IMR-90 (cell line): ENCODE measurements at regions of chr3 and their contacts with region 1.

Region 1: GRCh38 chr3:128584412-128585020 is 66.1 kb downstream of the RPN1 start:
- DNase-seq: peak; percentile 56
- ATAC-seq: peak; percentile 100
- H3K4me3 ChIP-seq: no peak overlapping the region
- H3K27ac ChIP-seq: no peak overlapping the region
- H3K4me1 ChIP-seq: no peaks in the 10 kb centered on the region
- H3K27me3 ChIP-seq: peaks cover 16% of the 10 kb centered on the region
- CTCF ChIP-seq: peak; percentile 80
- POLR2A ChIP-seq: no peak
- RAD21 ChIP-seq: peak; percentile 89

Region 2: GRCh38 chr3:128075516-128076482 is 508.7 kb before region 1 on chr3:
- CTCF ChIA-PET with region 1: no interaction called
- POLR2A ChIA-PET with region 1: no interaction called
- dilution Hi-C with region 1: no loop called
- in situ Hi-C with region 1: no loop called
- intact Hi-C with region 1: loop called (anchors 5 kb)
- DNase-seq: peak; percentile 79
- ATAC-seq: peak; percentile 88
- H3K4me3 ChIP-seq: peak overlapping the region; percentile 17; the same call in 1 of the 2 replicates
- H3K27ac ChIP-seq: peak overlapping the region; percentile 2; the same call in 1 of the 2 replicates
- H3K4me1 ChIP-seq: peaks cover 27% of the 10 kb centered on the region
- H3K27me3 ChIP-seq: no peaks in the 10 kb centered on the region
- CTCF ChIP-seq: peak; percentile 96
- POLR2A ChIP-seq: no peak
- RAD21 ChIP-seq: peak; percentile 85

Region 3: DNA sequence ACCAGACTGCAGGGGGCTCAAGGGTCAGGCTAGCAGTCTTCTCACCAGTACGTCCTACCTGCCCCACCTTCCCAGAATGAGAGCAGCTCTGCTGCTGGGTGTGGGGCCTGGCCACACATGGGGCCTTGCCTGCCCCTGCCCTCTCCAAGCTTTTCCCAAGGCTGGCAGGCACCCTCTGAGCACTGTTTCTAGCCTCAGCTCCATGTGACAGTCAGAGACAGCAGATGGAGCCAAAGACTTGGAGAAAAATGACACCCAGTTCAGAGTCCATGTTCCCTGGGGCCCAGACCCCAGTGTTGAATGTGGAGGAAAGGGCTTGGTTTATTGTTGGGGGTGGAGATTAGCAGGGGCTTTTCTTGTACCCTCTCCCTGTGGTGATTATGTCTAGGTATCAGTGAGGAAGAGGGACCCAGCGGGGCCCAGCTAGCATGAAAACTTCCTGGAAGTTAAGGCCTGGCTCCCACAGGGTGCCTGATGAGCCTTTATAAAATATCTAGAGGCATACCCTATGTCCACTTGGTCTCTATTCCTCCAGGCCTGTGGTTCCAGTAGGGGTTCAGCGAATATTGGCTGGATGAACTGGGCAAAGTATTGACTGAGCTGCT is 277.4 kb before region 1 on chr3:
- CTCF ChIA-PET with region 1: no interaction called
- POLR2A ChIA-PET with region 1: no interaction called
- dilution Hi-C with region 1: no loop called
- in situ Hi-C with region 1: no loop called
- intact Hi-C with region 1: loop called (anchors 10 kb)
- DNase-seq: no peak
- ATAC-seq: 0 out of 2 replicates have a peak, but pooled peaks have one; percentile 40
- H3K4me3 ChIP-seq: no peak overlapping the region
- H3K27ac ChIP-seq: no peak overlapping the region
- H3K4me1 ChIP-seq: no peaks in the 10 kb centered on the region
- H3K27me3 ChIP-seq: no peaks in the 10 kb centered on the region
- CTCF ChIP-seq: 0 out of 2 replicates have a peak, but pooled peaks have one; percentile 9
- POLR2A ChIP-seq: no peak
- RAD21 ChIP-seq: 0 out of 2 replicates have a peak, but pooled peaks have one; percentile 10

Region 4: DNA sequence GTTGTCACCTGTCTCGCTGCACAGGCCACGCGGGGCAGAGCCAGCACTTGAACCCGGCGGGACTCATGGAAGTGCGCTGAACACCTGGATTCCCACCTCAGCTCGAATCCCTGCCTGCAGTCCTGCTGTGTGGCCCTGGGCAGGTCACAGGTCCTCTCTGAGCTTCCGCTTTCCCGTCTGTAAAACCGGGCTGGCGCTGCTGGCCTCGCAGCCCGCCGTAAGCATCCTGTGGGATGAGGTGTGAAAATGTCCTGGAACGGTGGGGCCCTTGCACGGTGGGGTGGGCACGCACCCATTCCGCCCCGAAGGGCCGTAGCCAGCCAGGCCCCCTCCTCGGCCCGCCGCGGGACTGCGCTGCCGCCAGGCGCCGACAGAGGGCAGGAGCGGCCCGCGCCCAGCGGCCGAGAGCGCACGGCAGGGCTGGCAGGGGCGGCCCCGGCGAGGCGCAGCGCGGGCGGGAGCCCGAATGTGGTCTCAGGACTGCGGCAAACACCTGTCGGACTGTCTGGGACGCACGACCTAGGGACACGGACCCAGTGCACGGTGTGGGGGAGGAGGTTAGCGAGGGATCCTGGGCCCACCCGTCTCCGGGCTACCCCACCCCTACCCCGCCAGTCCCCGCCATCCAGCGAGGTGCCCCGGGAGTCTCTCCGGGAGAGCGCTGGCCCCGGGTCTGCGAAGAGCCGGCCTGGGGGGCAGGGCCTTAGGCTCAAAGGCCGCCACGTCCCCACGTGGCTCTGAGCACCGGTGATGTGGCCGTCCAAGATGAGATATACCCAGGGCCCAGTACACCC is 158.2 kb before region 1 on chr3:
- CTCF ChIA-PET with region 1: interaction called, 10 read pairs
- POLR2A ChIA-PET with region 1: no interaction called
- dilution Hi-C with region 1: no loop called
- in situ Hi-C with region 1: no loop called
- intact Hi-C with region 1: loop called (anchors 1 kb)
- DNase-seq: no peak
- ATAC-seq: peak; percentile 98
- H3K4me3 ChIP-seq: no peak overlapping the region
- H3K27ac ChIP-seq: no peak overlapping the region
- H3K4me1 ChIP-seq: no peaks in the 10 kb centered on the region; the same call in 1 of the 2 replicates
- H3K27me3 ChIP-seq: peaks cover 22% of the 10 kb centered on the region
- CTCF ChIP-seq: peak; percentile 94
- POLR2A ChIP-seq: no peak
- RAD21 ChIP-seq: peak; percentile 94

Region 5: DNA sequence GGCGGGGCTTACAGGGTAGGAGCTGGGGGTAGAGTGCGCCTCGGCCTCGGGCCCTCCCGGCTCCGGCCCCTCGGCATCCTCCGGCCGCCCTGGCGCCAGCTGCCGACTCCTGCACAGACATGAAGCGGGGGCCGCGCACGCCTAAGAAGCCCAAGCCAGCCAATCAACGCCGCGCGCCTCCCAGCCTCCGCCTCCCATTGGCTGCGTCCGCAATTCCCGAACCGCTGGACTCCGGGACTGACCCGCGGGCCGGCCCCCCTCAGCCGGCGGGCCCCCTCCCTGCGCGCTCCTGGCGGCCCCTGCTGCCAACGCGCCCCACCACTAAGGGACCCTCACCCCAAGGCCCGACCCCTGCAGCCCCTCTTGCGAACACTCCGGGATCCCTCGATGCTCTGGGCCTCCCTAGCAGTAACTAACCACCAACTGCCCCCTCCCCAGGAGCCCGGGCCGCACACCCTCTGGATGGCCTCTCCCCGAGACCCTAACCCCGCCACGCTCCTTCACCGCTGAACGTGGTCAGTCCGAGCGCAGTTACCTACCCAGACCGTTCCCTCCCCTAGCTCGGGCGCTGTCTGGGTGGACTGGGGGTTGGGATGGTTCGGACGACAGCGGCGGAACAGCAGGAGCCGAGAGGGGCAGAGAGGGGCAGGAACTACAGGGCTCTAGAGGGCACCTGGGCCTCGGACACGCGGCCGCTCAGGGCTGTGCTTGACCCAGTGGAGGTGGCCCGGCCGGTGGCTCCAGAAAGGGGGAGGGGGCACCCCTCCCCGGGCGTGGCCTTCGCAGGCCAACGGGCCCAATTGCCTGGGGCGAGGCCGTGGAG is 96.5 kb before region 1 on chr3:
- CTCF ChIA-PET with region 1: interaction called, 4 read pairs
- POLR2A ChIA-PET with region 1: no interaction called
- dilution Hi-C with region 1: no loop called
- in situ Hi-C with region 1: no loop called
- intact Hi-C with region 1: loop called (anchors 2 kb)
- DNase-seq: peak; percentile 87
- ATAC-seq: peak; percentile 83
- H3K4me3 ChIP-seq: peak overlapping the region; percentile 89
- H3K27ac ChIP-seq: peak overlapping the region; percentile 81
- H3K4me1 ChIP-seq: peaks cover 21% of the 10 kb centered on the region
- H3K27me3 ChIP-seq: peaks cover 30% of the 10 kb centered on the region; the same call in 1 of the 2 replicates
- CTCF ChIP-seq: no peak
- POLR2A ChIP-seq: peak; percentile 85
- RAD21 ChIP-seq: no peak

Region 6: GRCh38 chr3:128503164-128503651 is 81.3 kb before region 1 on chr3:
- CTCF ChIA-PET with region 1: interaction called, 5 read pairs
- POLR2A ChIA-PET with region 1: no interaction called
- dilution Hi-C with region 1: no loop called
- in situ Hi-C with region 1: no loop called
- intact Hi-C with region 1: loop called (anchors 5 kb)
- DNase-seq: no peak
- ATAC-seq: no peak
- H3K4me3 ChIP-seq: no peak overlapping the region
- H3K27ac ChIP-seq: no peak overlapping the region
- H3K4me1 ChIP-seq: no peaks in the 10 kb centered on the region
- H3K27me3 ChIP-seq: peaks cover 3% of the 10 kb centered on the region; the same call in 1 of the 2 replicates
- CTCF ChIP-seq: 0 out of 2 replicates have a peak, but pooled peaks have one; percentile 16
- POLR2A ChIP-seq: no peak
- RAD21 ChIP-seq: peak; percentile 7; the same call in 1 of the 2 replicates

Region 7: GRCh38 chr3:128617557-128618397 is 33.3 kb after region 1 on chr3:
- CTCF ChIA-PET with region 1: no interaction called
- POLR2A ChIA-PET with region 1: no interaction called
- dilution Hi-C with region 1: no loop called
- in situ Hi-C with region 1: no loop called
- intact Hi-C with region 1: no loop called
- DNase-seq: peak; percentile 93
- ATAC-seq: peak; percentile 97
- H3K4me3 ChIP-seq: peak overlapping the region; percentile 66
- H3K27ac ChIP-seq: peak overlapping the region; percentile 78
- H3K4me1 ChIP-seq: peaks cover 14% of the 10 kb centered on the region
- H3K27me3 ChIP-seq: no peaks in the 10 kb centered on the region
- CTCF ChIP-seq: peak; percentile 82
- POLR2A ChIP-seq: no peak
- RAD21 ChIP-seq: peak; percentile 62

Region 8: GRCh38 chr3:129211772-129212171 is 627.3 kb after region 1 on chr3:
- CTCF ChIA-PET with region 1: no interaction called
- POLR2A ChIA-PET with region 1: no interaction called
- dilution Hi-C with region 1: no loop called
- in situ Hi-C with region 1: no loop called
- intact Hi-C with region 1: no loop called
- DNase-seq: peak; percentile 79
- ATAC-seq: peak; percentile 75
- H3K4me3 ChIP-seq: no peak overlapping the region
- H3K27ac ChIP-seq: peak overlapping the region; percentile 58
- H3K4me1 ChIP-seq: peaks cover 8% of the 10 kb centered on the region
- H3K27me3 ChIP-seq: no peaks in the 10 kb centered on the region
- CTCF ChIP-seq: no peak
- POLR2A ChIP-seq: no peak
- RAD21 ChIP-seq: no peak